Dendritic cell treated with granulocyte-macrophage colony-stimulating factor and Interleukin-4, amounts not matched to agents 40 ng/mL and 50 ng/mL, for 4 days (primary cell): ENCODE measurements at regions of chr15 and their contacts with region 1.

Region 1: DNA sequence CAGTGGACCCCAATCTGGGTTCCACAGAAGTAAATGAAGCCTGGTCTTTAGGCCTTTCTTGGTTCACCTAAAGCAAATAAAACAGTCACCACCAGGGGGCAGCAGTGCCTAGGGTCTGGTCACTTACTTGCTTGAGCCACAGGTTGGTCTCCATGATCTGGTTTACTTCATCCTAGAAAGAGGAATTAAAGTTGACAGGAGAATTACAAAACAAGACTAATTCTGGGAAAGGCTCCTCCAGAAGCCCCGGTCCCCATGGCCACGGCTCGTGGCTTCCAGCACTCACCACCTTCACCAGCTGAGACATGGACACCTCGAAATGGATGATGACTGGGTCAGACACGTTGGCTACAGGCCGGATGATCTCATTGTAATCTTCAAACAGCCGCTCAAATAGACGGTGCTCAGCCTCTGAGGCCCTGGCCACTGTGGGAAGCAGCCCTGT is 2.3 kb downstream of the CHRNA3 start:
- H3K4me3 Mint-ChIP-seq: no peak overlapping the region
- H3K27ac Mint-ChIP-seq: no peak overlapping the region
- H3K4me1 Mint-ChIP-seq: peaks cover 14% of the 10 kb centered on the region
- H3K27me3 Mint-ChIP-seq: peaks cover 42% of the 10 kb centered on the region

Region 2: DNA sequence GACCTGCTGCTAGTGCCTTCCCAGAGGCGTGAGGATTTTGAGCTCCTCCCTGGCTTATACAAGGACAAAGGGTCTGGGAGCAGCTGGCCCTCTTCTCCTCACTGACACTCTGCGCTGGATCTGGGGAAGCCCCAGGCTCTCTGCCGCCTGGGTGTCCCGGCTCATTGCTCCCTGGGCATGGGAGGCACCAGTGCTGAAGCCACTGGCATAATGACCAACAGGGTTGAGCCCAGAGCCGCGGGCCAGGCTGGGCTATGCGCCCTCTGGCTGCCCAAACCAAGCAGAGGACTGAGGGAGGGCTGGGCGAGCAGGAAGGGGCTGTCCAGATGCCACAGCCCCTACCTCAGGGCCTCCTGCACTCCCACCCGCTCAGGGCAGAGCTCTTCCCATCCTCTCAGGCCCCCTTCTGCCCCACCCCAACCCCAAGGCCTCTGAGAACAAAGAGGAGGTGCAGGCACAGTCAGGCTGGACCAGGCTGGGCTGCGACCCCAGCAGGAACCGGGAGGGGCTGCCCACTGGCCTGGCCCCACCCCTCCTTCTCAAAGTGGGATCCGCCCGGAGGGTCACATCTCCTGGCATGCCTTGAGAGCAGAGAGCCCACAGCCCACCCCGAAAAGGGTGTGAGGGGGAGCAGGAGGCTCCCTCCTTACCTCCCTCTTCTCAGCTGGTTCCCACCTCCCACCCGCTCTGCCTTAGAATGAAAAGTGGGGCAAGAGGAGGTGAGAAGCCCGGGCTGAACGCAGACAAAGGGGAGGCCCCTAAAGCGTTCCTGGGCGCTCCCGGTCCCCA is 987.4 kb before region 1 on chr15:
- intact Hi-C with region 1: no loop called
- H3K4me3 Mint-ChIP-seq: no peak overlapping the region
- H3K27ac Mint-ChIP-seq: no peak overlapping the region
- H3K4me1 Mint-ChIP-seq: peaks cover 13% of the 10 kb centered on the region
- H3K27me3 Mint-ChIP-seq: peaks cover 78% of the 10 kb centered on the region

Region 3: GRCh38 chr15:78695854-78696253 is 77.3 kb after region 1 on chr15:
- intact Hi-C with region 1: no loop called
- H3K4me3 Mint-ChIP-seq: no peak overlapping the region
- H3K27ac Mint-ChIP-seq: no peak overlapping the region
- H3K4me1 Mint-ChIP-seq: peaks cover 12% of the 10 kb centered on the region
- H3K27me3 Mint-ChIP-seq: peaks cover 21% of the 10 kb centered on the region

Region 4: GRCh38 chr15:78709263-78709882 is 90.9 kb after region 1 on chr15:
- intact Hi-C with region 1: loop called (anchors 1 kb)
- H3K4me3 Mint-ChIP-seq: peak overlapping the region; percentile 17
- H3K27ac Mint-ChIP-seq: no peak overlapping the region
- H3K4me1 Mint-ChIP-seq: peaks cover 9% of the 10 kb centered on the region
- H3K27me3 Mint-ChIP-seq: peaks cover 32% of the 10 kb centered on the region

Region 5: GRCh38 chr15:78750566-78750965 is 132.1 kb after region 1 on chr15:
- intact Hi-C with region 1: loop called (anchors 5 kb)
- H3K4me3 Mint-ChIP-seq: peak overlapping the region; percentile 5
- H3K27ac Mint-ChIP-seq: no peak overlapping the region
- H3K4me1 Mint-ChIP-seq: peaks cover 6% of the 10 kb centered on the region
- H3K27me3 Mint-ChIP-seq: peaks cover 5% of the 10 kb centered on the region